Common myeloid progenitor, CD34-positive (primary cell): ENCODE measurements at regions of chr11 and their contacts with region 1.

Region 1: DNA sequence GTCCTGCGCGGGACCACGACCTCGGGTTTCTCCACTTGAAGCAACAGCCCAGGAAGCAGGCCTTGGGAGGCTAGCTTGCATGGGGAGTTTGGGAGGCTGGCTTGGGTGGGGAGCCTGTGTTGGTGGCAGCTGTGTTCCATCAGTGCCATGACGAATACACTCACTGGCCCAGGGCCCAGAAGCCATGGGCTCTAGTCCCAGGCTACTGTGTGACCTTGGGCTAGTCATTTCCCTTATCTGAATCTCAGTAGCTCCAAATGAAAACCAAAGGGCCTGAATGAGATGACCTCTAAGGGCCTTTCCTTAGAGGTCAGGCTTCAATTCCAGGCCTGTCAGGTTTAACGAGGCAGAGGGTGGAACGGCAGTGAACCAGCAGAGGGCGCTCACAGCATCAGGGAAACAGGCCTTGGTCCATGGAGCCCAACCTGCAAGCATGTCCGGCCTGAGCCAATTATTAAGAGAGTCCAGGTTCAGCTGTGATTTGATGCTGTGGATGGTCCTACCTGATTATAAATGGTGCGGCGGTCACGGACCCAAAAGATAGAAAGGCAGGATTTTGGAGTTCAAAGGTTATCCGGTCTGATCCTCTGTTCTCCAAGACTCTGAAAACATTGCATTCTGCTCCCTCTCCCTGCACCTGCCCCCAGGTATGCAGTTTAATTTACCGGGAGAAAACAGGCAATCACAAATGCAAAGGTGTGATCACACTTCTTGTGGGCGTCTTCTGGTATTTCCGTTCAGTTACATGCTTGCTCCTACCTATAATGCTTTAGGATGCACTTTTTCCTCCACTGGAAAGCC is 15.9 kb downstream of the PTPN5 start:
- DNase-seq: peak; percentile 57 to 71 (median 63)
- H3K4me3 ChIP-seq: no peak overlapping the region
- H3K27ac ChIP-seq: no peak overlapping the region
- H3K4me1 ChIP-seq: peaks cover 0 to 5% (median 3%) of the 10 kb centered on the region in 4 experiments
- H3K27me3 ChIP-seq: peaks cover 0 to 3% (median 0%) of the 10 kb centered on the region in 5 experiments

Region 2: DNA sequence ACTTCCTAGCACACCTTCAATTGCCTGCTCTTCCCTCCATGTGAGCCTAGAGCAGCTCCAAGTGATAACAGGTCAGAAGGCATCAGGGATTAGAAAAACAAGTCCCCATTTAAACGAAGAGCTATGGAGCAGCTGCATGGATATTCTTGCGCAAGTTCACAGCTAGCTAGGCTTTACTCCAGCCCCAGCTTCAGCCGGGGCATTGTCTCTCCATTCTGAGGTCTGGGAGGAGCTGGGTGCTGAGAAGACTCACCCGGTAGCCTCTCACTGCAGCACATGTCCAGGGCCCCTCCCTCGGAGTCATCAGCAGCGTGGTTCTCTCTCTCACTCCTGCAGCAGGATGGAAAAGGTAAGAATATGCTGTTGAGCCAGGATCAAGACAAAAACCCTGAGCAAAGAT is 10.1 kb before region 1 on chr11:
- CTCF ChIA-PET with region 1: interaction called, 27 read pairs
- POLR2A ChIA-PET with region 1: no interaction called
- DNase-seq: no peak
- H3K4me3 ChIP-seq: no peak overlapping the region
- H3K27ac ChIP-seq: no peak overlapping the region
- H3K4me1 ChIP-seq: peaks cover 0 to 2% (median 0%) of the 10 kb centered on the region in 4 experiments
- H3K27me3 ChIP-seq: peaks cover 0 to 4% (median 0%) of the 10 kb centered on the region in 5 experiments

Region 3: DNA sequence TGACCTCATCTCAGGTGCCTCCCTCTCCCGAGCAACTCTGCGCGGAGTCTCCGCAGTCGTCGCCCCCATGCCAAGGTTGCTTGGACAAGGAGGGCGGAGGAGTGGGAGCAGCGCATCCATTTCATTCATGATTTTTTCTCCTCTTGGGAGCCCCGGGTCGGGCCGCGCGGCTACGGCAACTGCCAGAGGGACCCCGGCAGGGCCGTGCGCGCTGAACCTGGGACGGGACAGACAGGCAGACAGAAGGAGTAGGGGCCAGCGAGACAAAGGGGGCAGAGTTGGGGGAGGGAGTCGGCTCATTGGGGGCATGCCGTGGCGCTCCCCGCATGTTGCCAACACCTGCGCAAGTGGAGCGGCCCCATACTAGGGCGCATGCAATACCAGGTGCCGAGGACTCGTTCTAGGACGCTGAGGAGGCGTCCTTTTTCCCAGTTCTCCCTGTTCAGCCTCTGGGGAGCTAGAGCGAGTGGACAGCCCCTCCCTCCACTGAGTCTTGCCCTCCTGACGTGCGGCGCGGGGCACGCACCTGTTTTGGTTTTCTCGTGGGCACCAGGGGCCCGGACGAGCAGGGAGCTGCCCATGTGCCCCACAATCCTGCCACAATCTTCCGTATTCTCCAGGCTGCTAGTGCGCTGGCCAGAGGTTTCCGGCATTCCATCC is 16.4 kb after region 1 on chr11:
- CTCF ChIA-PET with region 1: interaction called, 37 read pairs
- POLR2A ChIA-PET with region 1: no interaction called
- DNase-seq: peak in 1 of 3 donors; percentile 19
- H3K4me3 ChIP-seq: peak overlapping the region in 4 of 7 experiments; percentile 49 to 73 (median 64)
- H3K27ac ChIP-seq: no peak overlapping the region
- H3K4me1 ChIP-seq: peaks cover 0 to 19% (median 9%) of the 10 kb centered on the region in 4 experiments
- H3K27me3 ChIP-seq: peaks cover 2 to 68% (median 26%) of the 10 kb centered on the region in 5 experiments

Region 4: DNA sequence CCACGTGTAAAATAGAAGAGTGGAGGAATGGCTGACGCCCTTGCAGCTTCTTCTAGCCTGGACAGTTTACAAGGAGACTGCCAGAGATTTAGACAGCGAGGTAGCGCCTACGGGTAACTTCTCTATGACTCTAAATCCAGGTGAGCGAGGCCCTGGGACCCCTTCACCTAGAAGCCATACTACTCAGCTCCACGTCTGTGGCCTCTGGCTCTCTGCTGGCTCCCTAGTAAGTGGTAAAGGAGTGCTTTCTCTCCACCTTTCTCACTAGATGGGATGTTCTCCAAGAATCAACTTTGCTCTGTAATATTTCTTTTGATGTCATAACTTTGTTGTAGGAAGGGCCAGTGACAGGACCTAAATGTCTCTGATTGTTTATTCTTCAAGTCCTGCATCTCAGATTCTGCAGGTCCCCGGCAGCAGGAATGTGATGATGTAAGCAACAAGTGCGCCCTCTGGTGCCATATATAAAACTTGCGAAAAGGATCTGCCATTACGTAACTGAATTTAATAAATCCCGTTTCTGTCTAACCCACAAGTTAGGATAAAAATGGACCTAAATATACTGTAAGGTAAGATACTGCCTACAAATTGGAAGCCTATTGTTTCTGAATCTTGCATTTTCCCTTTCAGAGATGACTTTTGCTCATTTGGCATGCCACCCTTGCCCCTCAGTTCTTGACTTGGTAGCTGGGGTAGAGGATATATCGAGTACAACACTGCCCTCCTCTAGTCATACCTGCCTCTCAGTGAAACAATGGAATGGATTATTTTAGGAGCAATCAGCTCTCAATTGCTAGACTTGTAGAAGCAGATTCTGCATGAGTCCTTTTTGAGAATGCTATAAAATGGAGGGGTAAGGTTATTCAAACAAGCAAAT is 26.9 kb after region 1 on chr11:
- CTCF ChIA-PET with region 1: interaction called, 37 read pairs
- POLR2A ChIA-PET with region 1: interaction called, 4 read pairs
- DNase-seq: peak; percentile 75 to 86 (median 85)
- H3K4me3 ChIP-seq: no peak overlapping the region
- H3K27ac ChIP-seq: no peak overlapping the region
- H3K4me1 ChIP-seq: peaks cover 0 to 16% (median 3%) of the 10 kb centered on the region in 4 experiments
- H3K27me3 ChIP-seq: peaks cover 0 to 9% (median 0%) of the 10 kb centered on the region in 5 experiments